Activated CD4-positive, alpha-beta memory T cell treated with anti-CD3 and anti-CD28 coated beads for 36 hours (primary cell): ENCODE measurements at regions of chr4 and their contacts with region 1.

Region 1: DNA sequence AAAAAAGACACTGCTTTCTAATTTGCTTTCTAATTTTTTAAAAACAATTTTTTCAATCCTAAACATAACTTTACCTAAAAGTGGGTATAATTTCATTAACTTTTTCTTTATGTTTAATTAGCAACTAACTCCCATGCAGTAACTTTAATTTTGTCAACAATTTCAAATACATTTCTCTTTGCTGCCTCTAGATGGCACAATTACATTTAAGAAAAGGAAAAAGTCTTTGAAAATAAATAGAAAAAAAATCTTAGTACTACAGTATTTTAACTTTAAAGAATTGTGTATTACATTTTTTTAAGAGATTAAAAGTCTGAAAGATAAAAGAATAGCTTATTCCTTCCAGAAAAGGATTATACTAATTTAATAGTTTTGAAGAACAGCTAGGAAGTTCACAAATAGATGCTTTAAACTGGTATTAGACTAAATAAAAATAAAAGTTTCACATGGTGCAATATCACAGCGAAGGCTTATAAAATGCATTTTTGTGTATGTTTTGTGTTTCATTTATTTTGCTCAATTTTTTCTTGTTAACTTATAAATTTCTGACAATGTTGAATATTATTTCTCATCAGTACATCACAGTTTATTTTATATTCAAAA is 105.1 kb downstream of the ADGRA3 start:
- DNase-seq: no peak
- H3K4me3 Mint-ChIP-seq: no peak overlapping the region
- H3K27ac Mint-ChIP-seq: no peak overlapping the region
- H3K4me1 Mint-ChIP-seq: no peaks in the 10 kb centered on the region
- H3K27me3 Mint-ChIP-seq: no peaks in the 10 kb centered on the region

Region 2: GRCh38 chr4:22287631-22288030 is 123.1 kb before region 1 on chr4:
- CTCF ChIA-PET with region 1: no interaction called
- POLR2A ChIA-PET with region 1: no interaction called
- intact Hi-C with region 1: no loop called
- DNase-seq: no peak
- H3K4me3 Mint-ChIP-seq: no peak overlapping the region
- H3K27ac Mint-ChIP-seq: no peak overlapping the region
- H3K4me1 Mint-ChIP-seq: no peaks in the 10 kb centered on the region
- H3K27me3 Mint-ChIP-seq: no peaks in the 10 kb centered on the region

Region 3: GRCh38 chr4:22463179-22463578 is 52.4 kb after region 1 on chr4:
- CTCF ChIA-PET with region 1: no interaction called
- POLR2A ChIA-PET with region 1: no interaction called
- intact Hi-C with region 1: loop called (anchors 2 kb)
- DNase-seq: peak; percentile 37
- H3K4me3 Mint-ChIP-seq: no peak overlapping the region
- H3K27ac Mint-ChIP-seq: no peak overlapping the region
- H3K4me1 Mint-ChIP-seq: no peaks in the 10 kb centered on the region
- H3K27me3 Mint-ChIP-seq: no peaks in the 10 kb centered on the region

Region 4: DNA sequence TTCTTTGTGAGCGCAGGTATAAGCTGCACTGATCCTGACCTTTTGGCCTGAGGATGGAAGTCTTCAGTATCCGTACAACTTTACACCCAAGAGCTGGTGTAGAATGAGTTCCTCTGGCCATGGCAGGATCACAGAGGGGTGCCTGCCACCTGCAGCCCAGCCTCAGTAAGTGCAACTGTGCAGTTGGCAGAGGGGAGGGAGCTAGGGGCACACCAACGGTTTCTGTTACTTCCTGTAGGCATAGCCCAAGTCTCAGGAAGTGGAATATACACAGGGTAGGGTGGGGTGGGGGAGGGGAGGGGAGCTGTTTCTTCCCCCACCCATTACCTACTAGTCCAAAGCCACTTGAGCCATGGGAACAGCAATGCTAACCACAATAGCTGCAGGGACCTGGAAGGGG is 196.6 kb after region 1 on chr4:
- CTCF ChIA-PET with region 1: no interaction called
- POLR2A ChIA-PET with region 1: no interaction called
- intact Hi-C with region 1: no loop called
- DNase-seq: peak; percentile 25
- H3K4me3 Mint-ChIP-seq: no peak overlapping the region
- H3K27ac Mint-ChIP-seq: no peak overlapping the region
- H3K4me1 Mint-ChIP-seq: no peaks in the 10 kb centered on the region
- H3K27me3 Mint-ChIP-seq: no peaks in the 10 kb centered on the region